Heart left ventricle (tissue), 16 donors: ENCODE measurements at regions of chr9 and their contacts with region 1.

Region 1: DNA sequence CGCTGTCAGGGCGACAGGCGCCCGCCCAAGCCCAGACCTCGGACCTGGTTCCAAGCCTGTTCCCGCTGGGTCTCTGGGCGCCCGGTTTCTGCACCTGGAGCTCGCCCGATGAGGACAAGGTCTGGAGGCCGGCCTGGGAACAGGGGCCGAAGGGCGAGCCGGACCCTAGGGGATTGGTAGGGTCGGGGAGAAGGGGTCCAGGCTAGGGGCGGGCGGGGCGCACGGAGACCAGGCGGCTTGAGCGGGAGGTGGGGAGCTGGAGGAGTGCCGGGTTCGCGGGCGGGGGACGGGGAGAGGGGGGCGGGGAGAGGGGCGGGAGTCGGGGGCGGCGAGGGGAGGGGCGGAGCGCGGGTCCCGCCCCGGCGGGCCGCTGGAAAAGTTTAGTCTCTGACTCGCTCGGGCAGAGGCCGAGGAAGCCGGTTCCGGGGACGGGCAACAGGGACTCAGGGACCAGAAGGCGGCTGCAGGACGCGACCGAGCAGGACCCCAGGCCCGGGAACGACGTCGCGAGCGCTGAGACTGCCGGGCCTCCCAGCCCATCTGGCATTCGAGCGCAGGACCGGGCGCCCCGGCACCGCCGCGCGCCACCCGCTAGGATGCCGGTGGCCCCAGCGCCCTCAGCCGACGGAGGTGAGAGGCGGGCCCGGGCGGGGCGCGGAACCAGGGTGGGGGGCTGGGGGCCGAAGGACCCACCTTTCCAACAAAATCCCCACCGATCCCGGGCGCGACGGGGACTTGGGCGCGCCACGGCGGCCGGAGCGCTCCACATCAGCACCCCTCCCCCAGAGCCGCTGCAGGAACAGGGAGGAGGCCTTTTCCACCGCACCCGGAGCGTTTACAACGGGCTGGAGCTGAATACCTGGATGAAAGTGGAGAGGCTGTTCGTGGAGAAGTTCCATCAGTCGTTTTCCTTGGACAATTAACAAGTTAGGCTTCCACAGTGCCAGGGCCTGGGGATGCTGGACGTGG is at the start of gene S1PR3:
- DNase-seq: peak; percentile 79 to 84 (median 81)
- ATAC-seq: peak; percentile 46 to 92 (median 84)
- H3K4me3 ChIP-seq: peak within 1 kb of the TSS; percentile 53 to 94 (median 72)
- H3K27ac ChIP-seq: peak within 1 kb of the TSS; percentile 0 to 91 (median 76)
- H3K4me1 ChIP-seq: peaks cover 0 to 43% (median 10%) of the 10 kb centered on the region in 12 donors
- H3K27me3 ChIP-seq: peaks cover 0 to 12% (median 5%) of the 10 kb centered on the region in 9 donors
- CTCF ChIP-seq: peak in 6 of 12 donors; percentile 9 to 37 (median 17)
- POLR2A ChIP-seq: peak; percentile 42 to 90
- total RNA-seq, gene S1PR3: 7.4 to 50.3 (median 29.6) TPM

Region 2: DNA sequence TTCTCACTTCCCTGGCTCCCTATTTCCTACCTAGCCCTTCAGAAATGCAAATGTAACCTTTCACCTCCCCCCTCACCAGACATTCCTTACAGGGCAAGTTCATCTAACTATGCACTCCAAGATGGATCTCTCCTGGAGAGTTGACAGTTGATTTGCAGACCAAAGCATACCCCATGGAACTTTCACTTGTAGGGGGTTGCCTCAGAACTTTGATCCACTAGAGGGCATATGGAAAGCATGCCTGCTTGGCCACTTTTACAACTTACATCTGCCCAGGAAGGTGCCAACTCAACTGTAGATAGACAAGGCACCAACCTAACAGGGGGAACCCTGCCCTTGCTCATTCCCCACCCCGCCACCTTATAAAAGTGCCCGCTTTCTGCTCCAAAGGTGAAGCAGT is 268.6 kb before region 1 on chr9:
- intact Hi-C with region 1: loop called in 3 of 10 experiments (anchors 5 to 10 kb)
- DNase-seq: no peak
- ATAC-seq: peak in 3 of 4 donors; percentile 53 to 75 (median 68)
- H3K4me3 ChIP-seq: no peak overlapping the region
- H3K27ac ChIP-seq: no peak overlapping the region
- H3K4me1 ChIP-seq: peaks cover 0 to 8% (median 0%) of the 10 kb centered on the region in 12 donors
- H3K27me3 ChIP-seq: peaks cover 0 to 4% (median 0%) of the 10 kb centered on the region in 9 donors
- CTCF ChIP-seq: peak in 11 of 12 donors; percentile 17 to 51 (median 38)
- POLR2A ChIP-seq: no peak

Region 3: DNA sequence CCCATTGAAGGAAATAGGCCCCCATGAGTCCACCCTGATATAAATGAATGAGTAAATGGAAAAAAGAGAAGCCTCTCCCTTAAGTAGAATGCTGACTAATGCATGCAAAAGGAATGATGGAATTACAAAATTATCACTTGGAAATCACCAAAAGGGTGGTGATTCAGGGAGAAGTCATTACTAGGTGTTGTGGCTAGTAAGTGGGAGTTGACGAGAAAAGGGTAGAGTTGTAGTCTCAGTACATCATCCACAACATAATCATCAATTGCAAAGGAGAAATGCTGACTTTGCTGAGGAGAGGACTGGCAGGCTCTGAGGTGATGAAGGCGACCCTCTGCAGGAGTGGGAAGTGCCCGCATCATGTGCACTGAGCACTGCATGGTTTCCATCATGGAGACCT is 201.6 kb before region 1 on chr9:
- intact Hi-C with region 1: loop called in 7 of 10 experiments (anchors 5 to 10 kb)
- DNase-seq: no peak
- ATAC-seq: no peak
- H3K4me3 ChIP-seq: no peak overlapping the region
- H3K27ac ChIP-seq: no peak overlapping the region
- H3K4me1 ChIP-seq: peaks cover 0 to 35% (median 14%) of the 10 kb centered on the region in 12 donors
- H3K27me3 ChIP-seq: no peaks in the 10 kb centered on the region
- CTCF ChIP-seq: no peak
- POLR2A ChIP-seq: no peak

Region 4: GRCh38 chr9:88874383-88874782 is 117.0 kb before region 1 on chr9:
- intact Hi-C with region 1: loop called in 4 of 10 experiments (anchors 2 to 10 kb)
- DNase-seq: peak in 1 of 5 donors; percentile 39
- ATAC-seq: peak in 3 of 4 donors; percentile 36 to 55 (median 46)
- H3K4me3 ChIP-seq: no peak overlapping the region
- H3K27ac ChIP-seq: peak overlapping the region in 5 of 12 donors; percentile 0 to 78 (median 37)
- H3K4me1 ChIP-seq: peaks cover 0 to 29% (median 11%) of the 10 kb centered on the region in 12 donors
- H3K27me3 ChIP-seq: no peaks in the 10 kb centered on the region
- CTCF ChIP-seq: peak in 8 of 12 donors; percentile 15 to 38 (median 28)
- POLR2A ChIP-seq: no peak